Tibial artery (tissue), 4 donors: ENCODE measurements at regions of chr1 and their contacts with region 1.

Region 1: DNA sequence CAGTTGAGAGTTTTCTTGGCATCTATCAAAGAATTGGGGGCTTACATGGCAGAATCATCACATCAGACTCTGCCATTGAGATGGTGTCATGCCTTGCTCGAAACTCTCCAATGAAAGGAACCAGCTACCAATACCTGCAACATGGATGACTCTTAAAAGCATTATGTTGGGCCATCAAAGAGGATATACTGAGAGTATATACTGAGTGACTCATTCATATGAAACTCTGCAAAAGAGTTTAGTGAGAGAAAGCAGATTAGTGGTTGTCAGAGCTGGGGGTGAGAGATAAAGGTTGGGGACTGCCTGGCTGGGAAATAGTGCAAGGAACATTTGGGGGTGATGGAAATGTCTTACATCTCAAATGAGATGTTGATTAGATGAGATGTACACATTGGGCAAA is 14.7 kb upstream of the HMGB4 start:
- DNase-seq: no peak
- H3K4me3 ChIP-seq: no peak overlapping the region
- H3K27ac ChIP-seq: no peak overlapping the region
- H3K4me1 ChIP-seq: no peaks in the 10 kb centered on the region
- H3K27me3 ChIP-seq: no peaks in the 10 kb centered on the region
- CTCF ChIP-seq: no peak

Region 2: DNA sequence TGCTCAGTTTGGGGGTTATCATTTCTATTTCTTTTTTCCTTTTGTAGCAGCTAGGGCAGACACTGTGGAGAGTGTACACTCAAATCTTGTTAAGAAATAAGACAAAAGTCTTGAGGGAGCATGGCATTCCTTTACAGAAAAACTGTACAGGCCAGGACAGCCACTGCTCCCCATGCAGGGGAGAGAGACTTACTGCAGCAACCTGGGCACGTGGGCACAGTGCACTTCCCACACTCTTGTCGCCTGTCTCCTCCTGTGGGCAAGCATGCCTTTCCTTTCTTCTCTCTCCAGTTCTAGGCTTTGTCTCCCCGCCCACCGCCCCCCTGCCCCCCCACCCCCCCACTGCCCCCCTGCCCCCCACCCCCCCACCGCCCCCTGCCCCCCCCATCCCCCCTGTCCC is 470.2 kb before region 1 on chr1:
- intact Hi-C with region 1: loop called (anchors 5 kb)
- DNase-seq: no peak
- H3K4me3 ChIP-seq: no peak overlapping the region
- H3K27ac ChIP-seq: no peak overlapping the region
- H3K4me1 ChIP-seq: peaks cover 0 to 16% (median 5%) of the 10 kb centered on the region in 4 donors
- H3K27me3 ChIP-seq: no peaks in the 10 kb centered on the region
- CTCF ChIP-seq: no peak